ENCODE measurements at regions of chr7 and their contacts with region 1.

Region 1: DNA sequence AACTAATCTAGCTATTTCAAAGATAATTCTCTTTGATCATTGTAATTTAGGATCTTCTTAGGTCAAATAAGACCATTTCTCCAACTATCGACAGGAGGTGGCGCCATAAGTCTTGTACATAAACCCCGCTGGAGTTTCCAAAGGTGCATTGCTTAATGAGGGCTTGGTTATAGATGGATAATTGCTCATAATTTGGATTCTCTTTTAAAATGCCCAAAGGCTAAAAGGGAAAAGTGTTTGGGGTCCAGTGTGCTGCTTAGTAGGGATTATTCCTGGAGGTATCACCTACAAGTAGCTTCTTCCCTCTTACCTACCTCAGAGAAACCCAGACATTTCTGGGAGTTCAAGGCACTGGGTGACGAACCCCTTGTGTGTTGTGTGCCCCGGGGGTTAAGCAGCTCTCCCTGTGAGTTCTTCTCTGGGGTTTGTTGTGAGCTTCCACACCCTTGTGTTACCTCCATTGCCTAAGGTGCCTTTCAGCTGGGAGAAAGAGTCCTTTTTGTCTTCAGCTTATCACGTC is 75.2 kb downstream of the PAXIP1 start:
- DNase-seq: peak; percentile 67
- H3K4me3 ChIP-seq: peak overlapping the region; percentile 57
- CTCF ChIP-seq: peak; percentile 56

Region 2: DNA sequence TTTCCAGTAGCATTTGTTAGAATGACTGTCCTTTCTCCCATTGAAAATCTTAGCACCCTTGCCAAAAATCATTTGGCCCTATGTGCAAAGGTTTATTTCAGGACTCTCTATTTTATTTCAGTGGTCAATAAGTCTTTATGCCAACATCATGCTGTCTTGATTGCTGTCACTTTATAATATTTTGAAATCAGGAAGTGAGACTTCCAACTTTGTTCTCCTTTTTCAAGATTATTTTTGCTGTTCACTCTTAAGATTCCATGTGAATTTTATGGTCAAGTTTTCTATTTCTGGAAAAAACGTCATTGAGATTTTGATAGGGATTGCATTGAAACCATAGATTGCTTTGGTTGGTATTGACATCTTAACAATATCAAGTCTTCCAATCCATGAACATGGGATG is 10.2 kb after region 1 on chr7:
- CTCF ChIA-PET with region 1: interaction called, 17 read pairs
- POLR2A ChIA-PET with region 1: interaction called, 3 read pairs
- DNase-seq: no peak
- H3K4me3 ChIP-seq: no peak overlapping the region
- CTCF ChIP-seq: no peak

Region 3: DNA sequence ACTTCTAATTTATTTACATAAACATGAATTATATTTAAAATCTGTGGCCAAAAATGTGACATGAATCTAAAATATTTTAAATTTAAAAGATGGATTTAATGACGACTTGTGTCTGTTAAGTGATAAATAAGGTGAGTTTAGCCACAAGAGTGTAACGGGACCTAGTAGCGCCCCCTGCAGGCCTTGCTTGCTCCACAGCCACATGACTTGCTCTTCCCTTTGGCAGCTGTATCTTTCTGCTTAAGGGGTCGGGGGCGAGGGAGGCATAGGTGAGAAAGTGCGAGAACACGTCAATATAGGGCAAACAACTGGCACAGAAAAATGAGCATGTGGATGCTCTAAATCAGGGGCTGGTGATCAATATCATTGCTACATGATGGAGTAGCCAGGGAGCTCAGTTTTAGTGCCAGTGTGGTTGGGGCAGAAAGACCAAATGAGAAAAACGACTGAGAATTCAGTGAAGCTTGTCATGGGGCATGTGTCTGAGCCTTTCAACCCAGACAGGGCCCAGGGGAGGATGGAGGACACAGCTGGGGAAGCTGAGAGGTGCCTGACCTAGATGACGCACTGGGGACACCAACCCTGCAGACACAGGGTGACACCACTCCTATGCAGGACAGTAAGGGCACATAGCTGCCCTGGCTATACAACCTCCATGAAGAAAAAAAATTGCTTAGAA is 25.5 kb after region 1 on chr7:
- CTCF ChIA-PET with region 1: interaction called, 38 read pairs
- POLR2A ChIA-PET with region 1: no interaction called
- DNase-seq: no peak
- H3K4me3 ChIP-seq: no peak overlapping the region
- CTCF ChIP-seq: peak; percentile 73

Region 4: GRCh38 chr7:155356323-155357105 is 428.8 kb after region 1 on chr7:
- CTCF ChIA-PET with region 1: interaction called, 28 read pairs
- POLR2A ChIA-PET with region 1: no interaction called
- DNase-seq: no peak
- H3K4me3 ChIP-seq: no peak overlapping the region
- CTCF ChIP-seq: peak; percentile 28

Region 5: GRCh38 chr7:155702616-155703015 is 774.9 kb after region 1 on chr7:
- CTCF ChIA-PET with region 1: interaction called, 11 read pairs
- POLR2A ChIA-PET with region 1: no interaction called
- DNase-seq: no peak
- H3K4me3 ChIP-seq: no peak overlapping the region
- CTCF ChIP-seq: no peak

Measured in AG04449 (cell line).